ENCODE measurements at regions of chr17 and their contacts with region 1.

Region 1: GRCh38 chr17:42405963-42406495 is 17.0 kb downstream of the CAVIN1 start:
- DNase-seq: peak; percentile 87
- H3K4me3 ChIP-seq: no peak overlapping the region
- H3K27ac ChIP-seq: peak overlapping the region; percentile 72 to 90 (median 79)
- H3K4me1 ChIP-seq: peaks cover 33 to 67% (median 60%) of the 10 kb centered on the region in 4 donors
- H3K27me3 ChIP-seq: no peaks in the 10 kb centered on the region
- CTCF ChIP-seq: peak; percentile 87 to 97 (median 88)
- EP300 ChIP-seq: no peak
- POLR2A ChIP-seq: no peak

Region 2: GRCh38 chr17:42322382-42323267 is 83.4 kb before region 1 on chr17:
- in situ Hi-C with region 1: loop called (anchors 5 to 10 kb)
- intact Hi-C with region 1: loop called (anchors 5 kb)
- DNase-seq: peak; percentile 95
- H3K4me3 ChIP-seq: no peak overlapping the region
- H3K27ac ChIP-seq: peak overlapping the region in 3 of 4 donors; percentile 7 to 48 (median 17)
- H3K4me1 ChIP-seq: peaks cover 0 to 18% (median 2%) of the 10 kb centered on the region in 4 donors
- H3K27me3 ChIP-seq: no peaks in the 10 kb centered on the region
- CTCF ChIP-seq: peak; percentile 96 to 100 (median 99)
- EP300 ChIP-seq: no peak
- POLR2A ChIP-seq: no peak

Region 3: GRCh38 chr17:42463976-42464400 is 58.0 kb after region 1 on chr17:
- in situ Hi-C with region 1: no loop called
- intact Hi-C with region 1: no loop called
- DNase-seq: no peak
- H3K4me3 ChIP-seq: no peak overlapping the region
- H3K27ac ChIP-seq: peak overlapping the region; percentile 4 to 50 (median 32)
- H3K4me1 ChIP-seq: peaks cover 17 to 45% (median 22%) of the 10 kb centered on the region in 4 donors
- H3K27me3 ChIP-seq: no peaks in the 10 kb centered on the region
- CTCF ChIP-seq: no peak
- EP300 ChIP-seq: no peak
- POLR2A ChIP-seq: no peak

Region 4: GRCh38 chr17:42493319-42493718 is 87.3 kb after region 1 on chr17:
- in situ Hi-C with region 1: no loop called
- intact Hi-C with region 1: no loop called
- DNase-seq: no peak
- H3K4me3 ChIP-seq: no peak overlapping the region
- H3K27ac ChIP-seq: no peak overlapping the region
- H3K4me1 ChIP-seq: peaks cover 0 to 4% (median 0%) of the 10 kb centered on the region in 4 donors
- H3K27me3 ChIP-seq: no peaks in the 10 kb centered on the region
- CTCF ChIP-seq: no peak
- EP300 ChIP-seq: no peak
- POLR2A ChIP-seq: no peak